ENCODE measurements at regions of chr5 and their contacts with region 1.

Region 1: GRCh38 chr5:57173185-57174127 is at the start of gene GPBP1:
- DNase-seq: peak; percentile 94 to 99 (median 98)

Region 2: GRCh38 chr5:56814963-56815658 is 358.3 kb before region 1 on chr5 and contains the start of gene MAP3K1:
- intact Hi-C with region 1: loop called (anchors 10 kb)
- DNase-seq: peak in 41 of 42 donors; percentile 53 to 90 (median 81)

Region 3: DNA sequence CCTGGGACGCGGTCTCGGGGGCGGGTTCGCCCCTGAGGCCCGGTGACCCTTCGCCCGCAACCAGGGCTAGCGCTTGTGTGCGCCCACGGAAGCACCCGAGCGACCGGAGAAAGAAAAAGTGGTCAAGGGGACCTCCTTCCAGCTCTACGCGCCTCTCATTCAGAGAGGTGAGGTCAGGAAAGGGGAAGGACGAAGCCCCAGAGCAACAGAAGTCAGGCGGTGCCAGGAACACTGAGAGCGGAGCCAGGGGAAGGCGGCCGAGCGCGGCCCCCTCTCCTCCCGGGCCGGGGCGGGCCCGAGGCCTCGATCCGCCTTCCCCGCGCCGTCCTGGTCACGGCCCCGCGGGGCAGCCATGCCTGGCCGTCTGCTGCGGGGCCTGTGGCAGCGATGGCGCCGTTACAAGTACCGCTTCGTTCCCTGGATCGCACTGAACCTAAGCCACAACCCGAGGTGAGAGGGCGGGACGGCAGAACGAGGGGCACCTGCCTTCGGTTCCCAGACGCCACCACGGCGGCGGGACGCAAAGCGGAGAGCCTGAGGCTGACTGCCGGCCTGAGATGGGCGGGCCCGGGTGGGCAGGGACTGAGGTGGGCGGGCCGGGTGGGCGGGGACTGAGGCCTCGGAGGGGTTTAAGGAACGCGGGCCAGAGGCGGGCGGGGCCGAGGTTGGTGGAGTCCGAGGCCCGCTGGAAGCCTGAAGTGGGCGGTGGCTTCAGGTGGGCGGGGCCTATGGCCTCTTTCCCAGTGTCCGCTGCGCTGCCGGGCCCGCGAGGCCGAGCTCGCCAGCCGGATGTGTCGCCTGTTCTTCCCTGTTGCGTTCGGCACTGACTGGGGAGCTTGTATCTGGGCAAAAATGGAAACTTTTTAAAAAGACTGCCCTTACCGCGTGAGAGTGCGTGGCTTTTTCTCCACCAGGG is 263.9 kb before region 1 on chr5 and contains the start of gene SETD9:
- intact Hi-C with region 1: loop called (anchors 2 kb)
- DNase-seq: peak; percentile 91 to 98 (median 96)

Region 4: DNA sequence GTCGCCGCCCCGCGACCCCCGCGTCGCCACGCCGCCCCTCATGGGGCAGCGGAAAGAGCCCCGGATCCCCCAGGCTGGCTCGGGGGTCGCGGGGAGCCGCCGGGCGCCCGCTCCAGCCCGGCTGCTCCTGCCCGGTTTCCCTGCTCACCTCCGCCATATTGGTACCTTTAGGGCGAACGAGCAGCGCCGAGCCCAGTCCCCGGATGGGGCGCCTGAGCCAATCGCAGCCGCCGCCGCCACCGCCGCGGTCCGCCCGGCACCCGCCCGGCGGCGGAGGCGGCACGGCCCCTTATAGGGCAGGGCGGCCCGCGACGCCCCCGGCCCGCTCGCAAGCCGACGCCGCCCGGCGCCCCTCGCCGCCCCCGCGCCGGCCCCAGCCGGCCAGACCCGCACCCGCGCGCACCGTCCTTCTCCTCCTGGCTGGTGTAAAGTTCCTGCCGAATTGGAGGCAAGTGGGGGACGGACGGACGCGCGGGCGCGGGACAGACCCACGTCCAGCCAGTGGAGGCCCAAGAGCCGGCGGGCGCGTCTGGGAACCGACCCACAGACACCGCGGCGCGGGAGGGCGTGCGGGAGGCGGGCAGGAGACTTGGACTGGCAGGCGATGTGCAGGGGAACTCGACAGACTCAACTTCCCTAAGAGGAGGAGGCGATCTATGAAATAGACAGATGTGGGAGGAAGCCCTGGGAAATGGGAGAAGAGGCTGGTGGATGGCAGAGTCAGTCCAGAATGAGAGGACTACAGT is 221.3 kb before region 1 on chr5 and contains the start of gene MIER3:
- intact Hi-C with region 1: loop called (anchors 2 kb)
- DNase-seq: peak; percentile 11 to 93 (median 83)